Adrenal gland (tissue), 19 donors: ENCODE measurements at regions of chr6 and their contacts with region 1.

Region 1: GRCh38 chr6:83741089-83741488 is 32.2 kb upstream of the SNAP91 start:
- DNase-seq: no peak
- H3K4me3 ChIP-seq: no peak overlapping the region
- H3K27ac ChIP-seq: no peak overlapping the region
- H3K4me1 ChIP-seq: no peaks in the 10 kb centered on the region
- H3K27me3 ChIP-seq: no peaks in the 10 kb centered on the region
- CTCF ChIP-seq: no peak
- POLR2A ChIP-seq: no peak

Region 2: GRCh38 chr6:83597051-83597450 is 144.0 kb before region 1 on chr6:
- intact Hi-C with region 1: no loop called
- DNase-seq: no peak
- H3K4me3 ChIP-seq: no peak overlapping the region
- H3K27ac ChIP-seq: no peak overlapping the region
- H3K4me1 ChIP-seq: no peaks in the 10 kb centered on the region
- H3K27me3 ChIP-seq: no peaks in the 10 kb centered on the region
- CTCF ChIP-seq: no peak
- POLR2A ChIP-seq: no peak

Region 3: DNA sequence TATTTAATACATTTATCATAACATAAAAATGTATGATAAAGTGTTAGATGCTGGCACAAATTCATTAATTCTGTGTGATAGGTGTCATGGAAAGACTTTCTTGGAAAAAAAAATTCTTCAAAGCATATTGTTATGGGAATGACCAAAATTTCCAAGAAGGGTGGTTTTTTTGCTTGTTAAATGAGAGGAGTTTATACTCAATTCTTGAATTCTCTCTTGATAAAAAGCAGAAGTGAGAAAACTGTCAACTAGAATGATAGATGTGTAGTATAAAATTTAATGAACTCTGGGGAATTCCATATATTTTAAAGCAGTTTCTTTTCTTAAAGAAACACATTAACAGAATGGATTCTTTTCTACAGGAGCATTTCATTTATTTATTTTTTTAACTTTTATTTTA is 29.8 kb after region 1 on chr6:
- intact Hi-C with region 1: loop called in 1 of 2 experiments (anchors 2 kb)
- DNase-seq: no peak
- H3K4me3 ChIP-seq: no peak overlapping the region
- H3K27ac ChIP-seq: no peak overlapping the region
- H3K4me1 ChIP-seq: no peaks in the 10 kb centered on the region
- H3K27me3 ChIP-seq: no peaks in the 10 kb centered on the region
- CTCF ChIP-seq: no peak
- POLR2A ChIP-seq: no peak